Calu3 (cell line): ENCODE measurements at regions of chr6 and their contacts with region 1.

Region 1: GRCh38 chr6:149028767-149029405 is 282.1 kb downstream of the UST start:
- DNase-seq: peak; percentile 61
- H3K4me3 Mint-ChIP-seq: no peak overlapping the region
- H3K27ac Mint-ChIP-seq: no peak overlapping the region
- H3K4me1 Mint-ChIP-seq: peaks cover 22% of the 10 kb centered on the region
- H3K27me3 Mint-ChIP-seq: no peaks in the 10 kb centered on the region
- CTCF ChIP-seq: no peak

Region 2: GRCh38 chr6:148565930-148566663 is 462.8 kb before region 1 on chr6:
- CTCF ChIA-PET with region 1: no interaction called
- intact Hi-C with region 1: loop called (anchors 5 kb)
- DNase-seq: peak; percentile 38
- H3K4me3 Mint-ChIP-seq: no peak overlapping the region
- H3K27ac Mint-ChIP-seq: no peak overlapping the region
- H3K4me1 Mint-ChIP-seq: peaks cover 20% of the 10 kb centered on the region
- H3K27me3 Mint-ChIP-seq: no peaks in the 10 kb centered on the region
- CTCF ChIP-seq: no peak

Region 3: DNA sequence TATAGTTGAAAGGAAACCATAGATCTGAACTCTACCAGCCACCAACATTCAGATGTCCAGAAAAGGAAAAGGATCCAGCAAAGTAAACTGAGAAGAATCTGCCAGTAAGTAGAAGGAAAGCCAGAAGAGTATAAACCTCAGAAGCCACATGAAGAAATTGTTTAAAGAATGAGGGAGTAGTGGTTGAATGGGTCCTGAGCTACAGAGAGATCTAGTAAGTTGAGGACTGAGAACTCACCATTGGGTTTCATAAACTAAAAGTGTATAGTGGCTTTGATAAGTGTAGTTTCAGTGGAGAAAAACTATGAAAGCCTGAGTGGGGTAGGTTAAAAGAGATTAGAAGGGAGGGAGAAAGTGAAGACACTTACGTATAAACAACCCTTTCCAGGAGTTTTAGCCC is 339.2 kb after region 1 on chr6:
- CTCF ChIA-PET with region 1: no interaction called
- intact Hi-C with region 1: no loop called
- DNase-seq: no peak
- H3K4me3 Mint-ChIP-seq: no peak overlapping the region
- H3K27ac Mint-ChIP-seq: no peak overlapping the region
- H3K4me1 Mint-ChIP-seq: peaks cover 19% of the 10 kb centered on the region
- H3K27me3 Mint-ChIP-seq: no peaks in the 10 kb centered on the region
- CTCF ChIP-seq: no peak

Region 4: GRCh38 chr6:149513915-149514314 is 485.0 kb after region 1 on chr6:
- CTCF ChIA-PET with region 1: no interaction called
- intact Hi-C with region 1: loop called (anchors 2 kb)
- DNase-seq: no peak
- H3K4me3 Mint-ChIP-seq: no peak overlapping the region
- H3K27ac Mint-ChIP-seq: no peak overlapping the region
- H3K4me1 Mint-ChIP-seq: no peaks in the 10 kb centered on the region
- H3K27me3 Mint-ChIP-seq: no peaks in the 10 kb centered on the region
- CTCF ChIP-seq: no peak